ENCODE measurements at regions of chr7 and their contacts with region 1.

Region 1: DNA sequence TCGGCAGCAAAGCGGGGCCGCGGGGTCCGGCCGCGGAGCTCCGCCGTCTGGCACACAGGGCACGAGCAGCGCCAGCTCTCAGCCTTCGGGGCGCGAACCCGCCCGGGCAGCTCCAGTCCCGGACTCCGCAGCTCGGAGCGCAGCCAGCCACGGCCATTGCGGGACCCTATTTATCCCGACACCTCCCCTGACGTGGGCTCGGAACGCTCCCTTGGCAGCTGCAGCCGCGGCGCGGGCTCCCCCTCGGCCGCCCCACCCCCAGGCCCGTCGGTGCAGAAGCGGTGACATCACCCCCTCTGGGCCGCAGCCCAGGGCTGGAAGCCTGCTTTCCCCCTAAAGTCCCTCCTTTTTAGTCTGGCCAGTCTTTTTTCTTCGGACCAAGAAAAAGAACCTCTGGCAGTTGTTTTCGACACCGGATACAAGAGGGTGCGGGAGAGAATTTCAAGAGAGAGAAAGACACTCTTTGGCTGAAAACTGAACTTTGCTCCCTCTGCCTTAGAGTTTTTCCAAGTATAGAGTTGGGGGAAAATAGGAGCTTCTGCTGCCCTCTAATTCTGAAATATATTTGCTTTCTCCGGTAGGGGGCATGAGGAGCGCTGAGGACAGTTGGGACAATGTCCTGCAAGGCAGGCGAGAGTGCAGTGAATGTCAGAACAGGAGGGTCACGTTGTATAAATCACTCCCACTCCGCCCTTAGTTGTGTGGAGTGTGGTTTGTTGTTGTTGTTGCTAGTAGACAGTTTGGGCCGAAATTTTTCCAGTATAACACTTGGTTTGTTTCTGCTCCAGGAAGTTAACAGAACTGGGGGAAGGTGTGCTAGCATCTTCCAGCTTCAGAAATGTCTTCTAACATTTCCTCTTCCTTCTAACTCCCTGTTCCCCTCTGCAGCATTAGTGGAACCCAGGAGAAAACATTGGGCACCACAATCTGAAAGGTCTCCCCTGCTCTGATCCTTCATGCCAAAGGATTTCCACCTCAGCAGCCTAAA is at the start of gene SFRP4:
- DNase-seq: peak; percentile 57 to 69
- H3K4me3 ChIP-seq: peak within 1 kb of the TSS; percentile 27
- H3K4me3 Mint-ChIP-seq: peak within 1 kb of the TSS; percentile 45
- H3K27ac Mint-ChIP-seq: no peak within 1 kb of the TSS
- H3K4me1 ChIP-seq: peaks cover 9% of the 10 kb centered on the region; the same call in 1 of the 2 replicates
- H3K4me1 Mint-ChIP-seq: peaks cover 6% of the 10 kb centered on the region
- H3K27me3 ChIP-seq: no peaks in the 10 kb centered on the region; the same call in none of the 2 replicates
- H3K27me3 Mint-ChIP-seq: peaks cover 38% of the 10 kb centered on the region
- CTCF ChIP-seq: peak; percentile 74 to 77
- total RNA-seq, gene SFRP4: not detected in 2 replicates

Region 2: DNA sequence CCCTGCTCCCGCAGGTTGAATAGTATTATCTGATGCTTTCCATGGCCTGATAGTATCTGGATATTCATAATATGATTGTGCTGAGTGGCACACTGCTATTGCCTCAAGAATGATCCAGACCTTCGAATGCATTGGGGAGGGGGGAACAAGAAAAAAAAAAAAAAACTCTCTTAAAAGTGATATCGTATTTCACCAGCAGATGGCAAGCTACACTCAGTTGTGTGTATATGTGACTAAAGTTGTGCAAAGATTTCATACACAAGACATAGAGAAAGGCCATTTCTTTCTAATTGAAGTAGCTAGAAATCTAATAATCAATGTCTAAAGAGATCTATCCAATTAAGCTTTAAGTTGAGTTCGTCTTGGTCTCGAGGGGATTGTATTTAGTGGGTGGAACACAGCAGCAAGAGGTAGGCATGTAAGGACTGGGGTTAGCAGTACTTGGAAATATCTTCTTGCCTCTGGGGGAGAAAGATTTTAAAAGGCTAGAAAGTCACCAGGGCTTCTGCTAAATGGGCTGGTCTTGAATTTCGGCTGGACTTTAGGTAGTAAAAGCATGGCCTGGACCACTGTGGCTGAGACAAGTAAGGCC is 15.6 kb before region 1 on chr7:
- CTCF ChIA-PET with region 1: interaction called, 11 read pairs
- POLR2A ChIA-PET with region 1: no interaction called
- intact Hi-C with region 1: no loop called
- DNase-seq: peak in 1 of 2 experiments; percentile 27
- H3K4me3 ChIP-seq: no peak overlapping the region
- H3K4me3 Mint-ChIP-seq: no peak overlapping the region
- H3K27ac Mint-ChIP-seq: no peak overlapping the region
- H3K4me1 ChIP-seq: peaks cover 16% of the 10 kb centered on the region
- H3K4me1 Mint-ChIP-seq: peaks cover 6% of the 10 kb centered on the region
- H3K27me3 ChIP-seq: no peaks in the 10 kb centered on the region
- H3K27me3 Mint-ChIP-seq: no peaks in the 10 kb centered on the region
- CTCF ChIP-seq: peak; percentile 59 to 65

Region 3: DNA sequence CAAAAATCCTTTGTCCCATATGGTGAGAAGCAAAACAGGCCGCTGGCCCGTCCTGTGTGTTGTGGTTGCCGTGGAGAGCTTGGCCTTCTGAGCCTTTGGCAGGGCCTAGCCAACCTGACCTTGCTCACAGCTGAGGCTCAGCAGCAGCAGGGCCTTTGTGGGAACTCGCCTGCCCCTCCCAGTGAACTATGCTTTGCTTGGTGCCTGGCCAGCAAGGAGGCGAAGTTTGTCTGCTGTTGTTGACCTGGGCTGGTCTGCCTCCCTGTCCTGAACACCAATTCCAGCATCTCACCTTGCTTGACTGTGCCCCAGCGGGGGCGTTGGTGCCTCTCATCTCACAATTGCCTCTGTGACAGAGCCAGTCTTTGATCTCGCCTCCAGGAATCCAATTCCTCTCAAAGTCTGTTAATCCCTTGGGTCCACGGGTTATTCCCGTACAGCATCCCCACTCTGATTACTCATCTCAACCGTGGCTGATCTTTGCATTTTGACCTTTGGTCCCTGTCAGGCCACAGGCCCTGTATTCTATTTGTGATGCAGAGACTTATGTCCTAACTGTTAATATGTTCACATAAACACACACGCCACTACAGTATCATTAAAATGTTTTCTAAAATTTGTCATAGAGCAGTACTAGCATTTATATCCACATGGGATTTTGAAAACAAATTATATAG is 26.1 kb after region 1 on chr7:
- CTCF ChIA-PET with region 1: no interaction called
- POLR2A ChIA-PET with region 1: no interaction called
- intact Hi-C with region 1: loop called (anchors 1 kb)
- DNase-seq: peak; percentile 70 to 82
- H3K4me3 ChIP-seq: no peak overlapping the region
- H3K4me3 Mint-ChIP-seq: no peak overlapping the region
- H3K27ac Mint-ChIP-seq: no peak overlapping the region
- H3K4me1 ChIP-seq: peaks cover 14% of the 10 kb centered on the region
- H3K4me1 Mint-ChIP-seq: no peaks in the 10 kb centered on the region
- H3K27me3 ChIP-seq: no peaks in the 10 kb centered on the region
- H3K27me3 Mint-ChIP-seq: peaks cover 3% of the 10 kb centered on the region
- CTCF ChIP-seq: no peak

Region 4: DNA sequence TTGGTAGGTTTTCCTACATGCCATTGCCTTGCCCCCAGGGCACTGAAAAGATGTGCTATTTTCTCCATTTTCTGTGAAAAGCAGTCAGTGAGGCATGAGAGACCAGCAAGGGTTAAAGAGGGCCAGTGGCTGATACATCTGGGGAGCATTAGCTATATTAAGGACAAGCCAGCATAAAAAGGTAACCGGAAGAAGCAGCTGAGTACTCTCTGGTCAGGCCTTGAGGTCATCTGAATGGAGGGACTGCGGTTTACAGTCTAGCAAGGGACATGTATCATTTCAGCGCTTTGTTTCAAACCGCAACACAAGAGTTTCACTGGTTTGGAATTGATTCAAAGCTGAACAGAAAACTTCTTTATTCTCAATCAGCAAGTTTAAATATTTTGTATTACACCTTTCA is 123.9 kb after region 1 on chr7:
- CTCF ChIA-PET with region 1: no interaction called
- POLR2A ChIA-PET with region 1: no interaction called
- intact Hi-C with region 1: loop called (anchors 10 kb)
- DNase-seq: no peak
- H3K4me3 ChIP-seq: no peak overlapping the region
- H3K4me3 Mint-ChIP-seq: no peak overlapping the region
- H3K27ac Mint-ChIP-seq: no peak overlapping the region
- H3K4me1 ChIP-seq: no peaks in the 10 kb centered on the region
- H3K4me1 Mint-ChIP-seq: no peaks in the 10 kb centered on the region
- H3K27me3 ChIP-seq: no peaks in the 10 kb centered on the region
- H3K27me3 Mint-ChIP-seq: no peaks in the 10 kb centered on the region
- CTCF ChIP-seq: no peak

Region 5: GRCh38 chr7:38222481-38223096 is 305.6 kb after region 1 on chr7:
- CTCF ChIA-PET with region 1: no interaction called
- POLR2A ChIA-PET with region 1: no interaction called
- intact Hi-C with region 1: loop called (anchors 5 kb)
- DNase-seq: peak in 1 of 2 experiments; percentile 61
- H3K4me3 ChIP-seq: no peak overlapping the region
- H3K4me3 Mint-ChIP-seq: no peak overlapping the region
- H3K27ac Mint-ChIP-seq: no peak overlapping the region
- H3K4me1 ChIP-seq: no peaks in the 10 kb centered on the region
- H3K4me1 Mint-ChIP-seq: no peaks in the 10 kb centered on the region
- H3K27me3 ChIP-seq: no peaks in the 10 kb centered on the region
- H3K27me3 Mint-ChIP-seq: no peaks in the 10 kb centered on the region
- CTCF ChIP-seq: peak; percentile 85 to 87